Activated CD4-positive, alpha-beta T cell treated with anti-CD3 and anti-CD28 coated beads for 36 hours (primary cell): ENCODE measurements at regions of chr11 and their contacts with region 1.

Region 1: DNA sequence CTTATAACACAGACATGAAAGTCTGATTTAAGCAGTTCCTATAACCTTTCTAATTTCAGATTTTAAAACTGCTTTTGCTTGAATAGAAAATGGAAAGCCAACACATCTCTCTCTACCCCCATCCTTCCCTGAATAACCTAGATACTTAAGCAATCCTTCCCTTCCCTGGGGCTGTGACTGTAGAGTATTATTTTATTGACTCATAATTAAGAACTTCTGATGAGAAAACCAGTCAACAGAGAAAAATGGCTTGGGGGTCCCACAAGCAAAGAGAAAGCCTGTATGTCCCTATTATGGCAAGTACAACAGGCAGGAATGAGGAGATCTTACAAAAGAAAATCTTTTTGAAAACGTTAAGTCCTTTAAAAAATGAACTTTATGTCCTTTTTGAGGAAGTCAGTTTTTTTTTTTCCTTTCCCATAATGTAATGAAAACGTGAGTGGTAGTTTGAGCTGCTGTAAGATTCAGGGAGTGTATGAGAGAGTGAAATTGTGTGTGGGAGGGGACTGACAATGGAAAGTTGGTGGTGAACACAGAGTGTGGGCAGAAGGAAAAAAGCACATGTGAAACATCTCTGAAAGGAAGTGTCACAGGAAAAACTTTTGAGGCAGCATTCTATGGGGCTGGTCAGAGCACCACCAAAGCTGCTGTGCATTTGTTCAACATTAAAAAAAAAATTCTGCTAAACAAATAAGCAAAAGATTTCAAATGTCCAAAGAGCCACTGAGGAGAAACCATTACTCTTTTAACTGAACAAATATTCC is 154.6 kb downstream of the MAML2 start:
- DNase-seq: peak; percentile 53
- ATAC-seq: peak; percentile 43
- H3K4me3 Mint-ChIP-seq: peak overlapping the region; percentile 53
- H3K27ac Mint-ChIP-seq: peak overlapping the region; percentile 91
- H3K4me1 Mint-ChIP-seq: peaks cover 90% of the 10 kb centered on the region
- H3K27me3 Mint-ChIP-seq: no peaks in the 10 kb centered on the region

Region 2: GRCh38 chr11:96075532-96075959 is 112.9 kb before region 1 on chr11:
- CTCF ChIA-PET with region 1: interaction called, 4 read pairs
- POLR2A ChIA-PET with region 1: interaction called, 10 read pairs
- intact Hi-C with region 1: loop called in 1 of 2 experiments (anchors 1 kb)
- DNase-seq: peak; percentile 48
- ATAC-seq: peak; percentile 86
- H3K4me3 Mint-ChIP-seq: peak overlapping the region; percentile 20
- H3K27ac Mint-ChIP-seq: peak overlapping the region; percentile 90
- H3K4me1 Mint-ChIP-seq: peaks cover 89% of the 10 kb centered on the region
- H3K27me3 Mint-ChIP-seq: no peaks in the 10 kb centered on the region

Region 3: GRCh38 chr11:96168623-96169022 is 19.8 kb before region 1 on chr11:
- CTCF ChIA-PET with region 1: interaction called, 5 read pairs
- POLR2A ChIA-PET with region 1: no interaction called
- intact Hi-C with region 1: loop called in 1 of 2 experiments (anchors 2 kb)
- DNase-seq: peak; percentile 51
- ATAC-seq: peak; percentile 88
- H3K4me3 Mint-ChIP-seq: no peak overlapping the region
- H3K27ac Mint-ChIP-seq: peak overlapping the region; percentile 79
- H3K4me1 Mint-ChIP-seq: peaks cover 77% of the 10 kb centered on the region
- H3K27me3 Mint-ChIP-seq: no peaks in the 10 kb centered on the region

Region 4: GRCh38 chr11:96228473-96228891 is 40.1 kb after region 1 on chr11:
- CTCF ChIA-PET with region 1: interaction called, 3 read pairs
- POLR2A ChIA-PET with region 1: no interaction called
- intact Hi-C with region 1: loop called in 1 of 2 experiments (anchors 2 kb)
- DNase-seq: no peak
- ATAC-seq: no peak
- H3K4me3 Mint-ChIP-seq: no peak overlapping the region
- H3K27ac Mint-ChIP-seq: peak overlapping the region; percentile 88
- H3K4me1 Mint-ChIP-seq: peaks cover 88% of the 10 kb centered on the region
- H3K27me3 Mint-ChIP-seq: no peaks in the 10 kb centered on the region

Region 5: DNA sequence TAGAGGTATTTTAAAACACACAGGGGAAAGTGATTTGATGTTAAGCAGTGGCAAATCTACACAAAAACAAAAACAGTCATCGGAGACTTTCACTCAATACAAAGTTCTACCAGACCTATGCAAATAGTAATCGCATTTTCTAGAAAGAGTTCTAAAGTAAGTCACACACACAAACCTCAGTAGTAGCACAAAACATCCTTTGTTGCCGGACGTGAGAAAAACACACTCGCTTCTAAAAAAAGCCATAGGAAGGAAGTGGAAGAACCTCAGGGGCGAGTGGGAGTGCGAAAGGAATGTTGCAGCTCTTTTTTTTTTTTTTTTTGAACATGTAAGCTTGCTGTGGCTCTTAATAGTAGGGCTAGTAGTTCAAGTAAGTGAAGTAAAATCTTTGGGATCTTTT is 65.7 kb after region 1 on chr11:
- CTCF ChIA-PET with region 1: no interaction called
- POLR2A ChIA-PET with region 1: interaction called, 5 read pairs
- intact Hi-C with region 1: loop called in 1 of 2 experiments (anchors 1 kb)
- DNase-seq: peak; percentile 42
- ATAC-seq: peak; percentile 37
- H3K4me3 Mint-ChIP-seq: peak overlapping the region; percentile 53
- H3K27ac Mint-ChIP-seq: peak overlapping the region; percentile 88
- H3K4me1 Mint-ChIP-seq: peaks cover 89% of the 10 kb centered on the region
- H3K27me3 Mint-ChIP-seq: no peaks in the 10 kb centered on the region

Region 6: GRCh38 chr11:97163631-97164191 is 975.3 kb after region 1 on chr11:
- CTCF ChIA-PET with region 1: no interaction called
- POLR2A ChIA-PET with region 1: no interaction called
- intact Hi-C with region 1: no loop called
- DNase-seq: no peak
- ATAC-seq: no peak
- H3K4me3 Mint-ChIP-seq: no peak overlapping the region
- H3K27ac Mint-ChIP-seq: no peak overlapping the region
- H3K4me1 Mint-ChIP-seq: no peaks in the 10 kb centered on the region
- H3K27me3 Mint-ChIP-seq: no peaks in the 10 kb centered on the region